A673 (cell line): ENCODE measurements at regions of chr4 and their contacts with region 1.

Region 1: GRCh38 chr4:108240366-108240765 is 71.6 kb upstream of the LEF1 start:
- DNase-seq: no peak
- H3K4me3 ChIP-seq: no peak overlapping the region
- H3K27ac ChIP-seq: no peak overlapping the region
- H3K4me1 ChIP-seq: no peaks in the 10 kb centered on the region
- H3K27me3 ChIP-seq: no peaks in the 10 kb centered on the region
- CTCF ChIP-seq: no peak

Region 2: GRCh38 chr4:108227923-108228322 is 12.4 kb before region 1 on chr4:
- CTCF ChIA-PET with region 1: no interaction called
- POLR2A ChIA-PET with region 1: no interaction called
- intact Hi-C with region 1: loop called (anchors 1 kb)
- DNase-seq: no peak
- H3K4me3 ChIP-seq: no peak overlapping the region
- H3K27ac ChIP-seq: no peak overlapping the region
- H3K4me1 ChIP-seq: no peaks in the 10 kb centered on the region
- H3K27me3 ChIP-seq: no peaks in the 10 kb centered on the region
- CTCF ChIP-seq: no peak